ENCODE measurements at regions of chr2 and their contacts with region 1.

Region 1: DNA sequence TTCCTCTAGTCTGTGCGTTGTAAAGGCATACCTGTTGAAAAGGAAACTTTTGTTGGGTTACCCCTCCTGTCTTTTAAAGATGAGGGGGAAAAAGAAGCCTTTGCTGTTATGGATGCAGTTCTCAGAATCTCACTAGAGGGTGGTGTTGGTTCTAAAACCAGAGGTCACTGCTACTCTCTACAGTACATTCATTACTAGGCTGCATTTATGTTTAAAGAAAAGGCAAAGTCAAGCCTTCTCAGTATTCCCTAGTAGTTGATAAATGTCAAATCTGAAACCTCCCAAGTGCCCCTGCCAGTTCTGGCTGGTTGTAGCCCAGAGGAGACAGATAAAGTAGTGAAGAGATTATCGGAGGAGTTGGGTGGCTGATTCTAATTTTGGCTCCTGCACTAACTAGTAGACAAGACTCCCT is 1.4 kb upstream of the PLCL1 start:
- DNase-seq: peak in 1 of 2 donors; percentile 78
- ATAC-seq: peak in 1 of 3 donors; percentile 43
- H3K4me3 ChIP-seq: no peak overlapping the region
- H3K4me3 Mint-ChIP-seq: peak overlapping the region; percentile 52
- H3K27ac ChIP-seq: no peak overlapping the region
- H3K27ac Mint-ChIP-seq: no peak overlapping the region
- H3K4me1 ChIP-seq: peaks cover 8% of the 10 kb centered on the region
- H3K4me1 Mint-ChIP-seq: peaks cover 13 to 17% of the 10 kb centered on the region in 2 donors
- H3K27me3 ChIP-seq: peaks cover 13% of the 10 kb centered on the region
- H3K27me3 Mint-ChIP-seq: peaks cover 47 to 82% of the 10 kb centered on the region in 2 donors
- CTCF ChIP-seq: peak; percentile 30

Region 2: GRCh38 chr2:197705121-197705911 is 97.7 kb before region 1 on chr2 and contains the start of gene MARS2:
- intact Hi-C with region 1: no loop called
- DNase-seq: peak; percentile 89 to 98
- ATAC-seq: peak; percentile 86 to 94 (median 89)
- H3K4me3 ChIP-seq: peak within 1 kb of the TSS; percentile 97
- H3K4me3 Mint-ChIP-seq: peak within 1 kb of the TSS; percentile 88
- H3K27ac ChIP-seq: peak within 1 kb of the TSS; percentile 81
- H3K27ac Mint-ChIP-seq: peak within 1 kb of the TSS; percentile 88 to 92
- H3K4me1 ChIP-seq: peaks cover 21% of the 10 kb centered on the region
- H3K4me1 Mint-ChIP-seq: peaks cover 52 to 53% of the 10 kb centered on the region in 2 donors
- H3K27me3 ChIP-seq: no peaks in the 10 kb centered on the region
- H3K27me3 Mint-ChIP-seq: peaks cover 9 to 25% of the 10 kb centered on the region in 2 donors
- CTCF ChIP-seq: no peak
- total RNA-seq, gene MARS2: 5.7 to 12.2 (median 11.8) TPM

Region 3: DNA sequence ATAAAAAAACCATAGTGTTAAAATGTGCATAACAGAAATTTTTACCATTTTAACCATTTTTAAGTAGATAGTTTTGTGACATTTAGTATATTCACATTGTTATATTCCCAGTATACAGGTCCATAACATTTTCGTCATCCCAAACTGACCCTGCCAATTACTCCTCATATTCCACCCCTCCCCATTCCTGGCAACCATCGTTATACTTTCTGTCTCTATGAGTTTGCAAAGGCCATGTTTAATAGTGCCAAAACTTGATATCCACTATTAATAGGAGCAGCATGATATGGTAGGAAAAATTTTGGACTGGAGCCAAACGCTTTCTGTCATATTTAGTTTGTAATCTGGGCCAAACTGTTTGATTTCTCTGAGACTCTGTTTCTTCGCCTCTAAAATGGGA is 32.3 kb after region 1 on chr2:
- intact Hi-C with region 1: no loop called
- DNase-seq: no peak
- ATAC-seq: no peak
- H3K4me3 ChIP-seq: no peak overlapping the region
- H3K4me3 Mint-ChIP-seq: no peak overlapping the region
- H3K27ac ChIP-seq: no peak overlapping the region
- H3K27ac Mint-ChIP-seq: no peak overlapping the region
- H3K4me1 ChIP-seq: no peaks in the 10 kb centered on the region
- H3K4me1 Mint-ChIP-seq: peaks cover 0 to 7% of the 10 kb centered on the region in 2 donors
- H3K27me3 ChIP-seq: no peaks in the 10 kb centered on the region
- H3K27me3 Mint-ChIP-seq: peaks cover 5 to 13% of the 10 kb centered on the region in 2 donors
- CTCF ChIP-seq: no peak

Region 4: DNA sequence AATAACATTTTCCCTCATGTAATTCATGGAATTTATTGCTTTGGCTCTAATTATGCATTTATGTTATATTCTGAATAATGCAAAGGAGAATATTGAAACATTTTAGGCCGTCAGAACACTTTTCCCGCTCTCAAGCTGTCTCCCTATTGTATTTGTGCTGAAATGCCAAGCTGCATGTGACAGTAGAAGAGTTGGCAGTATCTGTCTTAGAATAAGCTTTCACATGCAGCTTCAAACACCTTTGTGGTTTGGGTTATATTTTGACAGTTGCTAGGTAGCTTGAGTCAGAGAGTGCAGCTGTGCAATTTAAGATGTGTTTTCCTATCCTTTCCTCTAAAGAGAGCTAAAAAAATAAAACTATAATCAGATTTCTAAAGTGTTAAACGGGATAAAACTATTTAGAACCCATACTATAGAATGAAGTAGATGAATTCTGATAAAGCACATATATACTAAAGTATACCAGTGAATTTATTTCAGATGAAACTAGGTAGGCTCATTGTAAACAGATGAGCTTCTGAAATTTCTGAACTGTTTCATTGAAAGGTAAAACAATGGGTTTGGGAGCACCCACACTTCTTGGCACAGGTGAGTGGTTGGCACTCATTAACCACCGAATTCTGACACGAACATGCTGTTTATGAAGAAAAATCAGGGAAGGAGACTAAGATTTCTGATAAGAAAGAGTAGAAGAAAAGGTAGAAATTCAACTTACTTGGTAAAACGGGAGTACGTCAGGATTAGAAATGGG is 44.8 kb after region 1 on chr2:
- intact Hi-C with region 1: no loop called
- DNase-seq: peak in 1 of 2 donors; percentile 78
- ATAC-seq: no peak
- H3K4me3 ChIP-seq: no peak overlapping the region
- H3K4me3 Mint-ChIP-seq: no peak overlapping the region
- H3K27ac ChIP-seq: no peak overlapping the region
- H3K27ac Mint-ChIP-seq: peak overlapping the region in 1 of 2 donors; percentile 21
- H3K4me1 ChIP-seq: no peaks in the 10 kb centered on the region
- H3K4me1 Mint-ChIP-seq: no peaks in the 10 kb centered on the region
- H3K27me3 ChIP-seq: peaks cover 4% of the 10 kb centered on the region
- H3K27me3 Mint-ChIP-seq: peaks cover 9 to 47% of the 10 kb centered on the region in 2 donors
- CTCF ChIP-seq: no peak

Region 5: GRCh38 chr2:198053776-198054698 is 251.0 kb after region 1 on chr2:
- intact Hi-C with region 1: loop called (anchors 1 kb)
- DNase-seq: peak in 1 of 2 donors; percentile 72
- ATAC-seq: peak in 1 of 3 donors; percentile 39
- H3K4me3 ChIP-seq: no peak overlapping the region
- H3K4me3 Mint-ChIP-seq: no peak overlapping the region
- H3K27ac ChIP-seq: no peak overlapping the region
- H3K27ac Mint-ChIP-seq: no peak overlapping the region
- H3K4me1 ChIP-seq: no peaks in the 10 kb centered on the region
- H3K4me1 Mint-ChIP-seq: no peaks in the 10 kb centered on the region
- H3K27me3 ChIP-seq: no peaks in the 10 kb centered on the region
- H3K27me3 Mint-ChIP-seq: no peaks in the 10 kb centered on the region
- CTCF ChIP-seq: no peak

Region 6: GRCh38 chr2:198127627-198128026 is 324.6 kb after region 1 on chr2:
- intact Hi-C with region 1: loop called (anchors 1 kb)
- DNase-seq: peak in 1 of 2 donors; percentile 76
- ATAC-seq: no peak
- H3K4me3 ChIP-seq: no peak overlapping the region
- H3K4me3 Mint-ChIP-seq: no peak overlapping the region
- H3K27ac ChIP-seq: no peak overlapping the region
- H3K27ac Mint-ChIP-seq: no peak overlapping the region
- H3K4me1 ChIP-seq: no peaks in the 10 kb centered on the region
- H3K4me1 Mint-ChIP-seq: no peaks in the 10 kb centered on the region
- H3K27me3 ChIP-seq: no peaks in the 10 kb centered on the region
- H3K27me3 Mint-ChIP-seq: peaks cover 0 to 14% of the 10 kb centered on the region in 2 donors
- CTCF ChIP-seq: no peak

Region 7: GRCh38 chr2:198296665-198297308 is 493.7 kb after region 1 on chr2:
- intact Hi-C with region 1: loop called (anchors 1 kb)
- DNase-seq: peak; percentile 18 to 83
- ATAC-seq: peak; percentile 67 to 81 (median 75)
- H3K4me3 ChIP-seq: no peak overlapping the region
- H3K4me3 Mint-ChIP-seq: no peak overlapping the region
- H3K27ac ChIP-seq: no peak overlapping the region
- H3K27ac Mint-ChIP-seq: no peak overlapping the region
- H3K4me1 ChIP-seq: no peaks in the 10 kb centered on the region
- H3K4me1 Mint-ChIP-seq: peaks cover 0 to 6% of the 10 kb centered on the region in 2 donors
- H3K27me3 ChIP-seq: no peaks in the 10 kb centered on the region
- H3K27me3 Mint-ChIP-seq: peaks cover 9 to 14% of the 10 kb centered on the region in 2 donors
- CTCF ChIP-seq: peak; percentile 84

Measured in natural killer cell (primary cell).